Activated CD4-positive, alpha-beta T cell treated with anti-CD3 and anti-CD28 coated beads, Interleukin-2, amount 10 ng/mL, durations not matched to agents 24 days and 14 days (primary cell): ENCODE measurements at regions of chr4 and their contacts with region 1.

Region 1: DNA sequence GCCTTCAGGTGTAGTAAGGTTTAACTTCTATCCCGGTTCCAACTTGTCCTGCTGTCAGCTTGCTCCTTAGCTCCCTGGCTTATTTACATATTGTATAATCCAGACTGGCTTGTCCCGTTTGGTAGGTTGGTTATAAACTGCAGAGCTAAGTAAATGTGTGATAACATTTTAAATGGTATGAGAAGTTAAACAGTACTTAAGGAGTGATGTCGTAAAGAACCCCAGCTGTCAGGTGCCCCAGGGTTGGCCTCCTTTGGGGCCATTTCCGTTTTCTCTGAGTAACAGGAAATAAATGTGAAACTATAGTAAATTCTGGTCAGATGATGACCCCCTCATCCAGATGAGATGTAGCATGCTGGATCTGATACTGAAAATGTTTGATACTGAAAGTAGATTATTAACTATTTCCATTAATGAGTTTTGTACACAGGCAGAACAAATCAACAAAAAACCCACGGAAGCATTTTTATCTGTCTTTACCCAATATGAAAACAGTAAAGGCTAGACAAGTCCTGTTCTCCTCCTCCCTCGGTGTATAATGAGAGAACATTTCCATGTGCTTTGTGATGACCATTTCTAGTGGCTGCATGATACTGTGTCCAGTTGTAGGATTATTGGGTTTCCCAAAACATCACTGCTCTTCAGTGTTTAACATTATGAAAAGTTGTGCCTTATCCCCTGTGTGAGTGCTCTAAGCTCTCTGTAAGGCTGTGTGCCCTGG is 22.4 kb downstream of the GAB1 start:
- DNase-seq: peak; percentile 74
- H3K4me3 Mint-ChIP-seq: peak overlapping the region; percentile 67
- H3K27ac Mint-ChIP-seq: peak overlapping the region; percentile 91
- H3K4me1 Mint-ChIP-seq: peaks cover 20% of the 10 kb centered on the region
- H3K27me3 Mint-ChIP-seq: peaks cover 9% of the 10 kb centered on the region

Region 2: GRCh38 chr4:143224255-143224654 is 134.8 kb before region 1 on chr4:
- intact Hi-C with region 1: no loop called
- DNase-seq: no peak
- H3K4me3 Mint-ChIP-seq: no peak overlapping the region
- H3K27ac Mint-ChIP-seq: no peak overlapping the region
- H3K4me1 Mint-ChIP-seq: no peaks in the 10 kb centered on the region
- H3K27me3 Mint-ChIP-seq: no peaks in the 10 kb centered on the region

Region 3: GRCh38 chr4:143335979-143336780 is 22.9 kb before region 1 on chr4:
- intact Hi-C with region 1: loop called (anchors 1 kb)
- DNase-seq: peak; percentile 76
- H3K4me3 Mint-ChIP-seq: peak overlapping the region; percentile 86
- H3K27ac Mint-ChIP-seq: no peak overlapping the region
- H3K4me1 Mint-ChIP-seq: peaks cover 6% of the 10 kb centered on the region
- H3K27me3 Mint-ChIP-seq: peaks cover 53% of the 10 kb centered on the region